Adrenal gland (tissue), 19 donors: ENCODE measurements at regions of chr2 and their contacts with region 1.

Region 1: DNA sequence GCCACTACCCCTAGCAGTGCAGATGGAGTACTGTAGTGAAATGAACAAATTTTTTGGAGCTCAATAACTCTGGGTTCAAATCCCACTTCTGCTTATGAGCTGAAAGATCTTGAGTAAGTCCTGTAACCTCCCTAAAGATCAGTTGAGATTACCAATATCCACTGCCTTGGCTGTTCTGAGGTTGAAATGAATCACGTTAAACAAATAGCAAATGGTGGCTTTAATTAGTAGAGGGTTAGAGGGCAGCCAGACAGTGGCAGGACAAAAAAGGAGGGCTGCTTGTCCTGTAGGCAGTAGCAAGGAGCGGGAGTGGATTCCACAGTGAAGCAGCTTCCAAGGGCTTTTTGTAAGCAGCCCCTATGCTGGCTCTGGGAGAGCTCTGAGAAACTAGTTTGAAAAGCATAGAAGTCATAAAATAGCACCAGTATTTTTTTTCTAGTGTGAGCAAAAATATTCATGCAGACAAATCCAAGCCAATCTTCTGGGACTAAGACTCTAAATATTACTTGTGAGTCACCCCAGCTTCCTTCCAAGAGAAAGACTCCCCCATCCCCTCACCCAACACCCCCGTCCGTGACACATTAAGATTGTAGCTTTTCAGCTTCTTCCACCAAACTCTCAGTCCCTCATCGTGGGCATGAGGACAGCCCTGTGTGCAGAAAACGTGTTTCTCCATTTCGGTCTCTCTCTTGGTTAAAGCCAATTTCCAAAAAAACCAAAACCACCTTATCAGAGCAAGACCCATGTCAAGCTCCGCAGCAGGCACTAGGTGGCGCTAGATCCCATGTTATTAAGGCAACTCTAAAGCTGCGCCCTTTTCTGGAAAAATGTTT is 123.5 kb upstream of the LGALSL start:
- DNase-seq: peak; percentile 78 to 93 (median 86)
- H3K4me3 ChIP-seq: peak overlapping the region in 1 of 4 donors; percentile 38
- H3K27ac ChIP-seq: peak overlapping the region in 2 of 5 donors; percentile 48 to 50
- H3K4me1 ChIP-seq: peaks cover 0 to 25% of the 10 kb centered on the region in 2 donors
- H3K27me3 ChIP-seq: no peaks in the 10 kb centered on the region
- CTCF ChIP-seq: peak; percentile 92 to 98 (median 96)
- POLR2A ChIP-seq: no peak

Region 2: DNA sequence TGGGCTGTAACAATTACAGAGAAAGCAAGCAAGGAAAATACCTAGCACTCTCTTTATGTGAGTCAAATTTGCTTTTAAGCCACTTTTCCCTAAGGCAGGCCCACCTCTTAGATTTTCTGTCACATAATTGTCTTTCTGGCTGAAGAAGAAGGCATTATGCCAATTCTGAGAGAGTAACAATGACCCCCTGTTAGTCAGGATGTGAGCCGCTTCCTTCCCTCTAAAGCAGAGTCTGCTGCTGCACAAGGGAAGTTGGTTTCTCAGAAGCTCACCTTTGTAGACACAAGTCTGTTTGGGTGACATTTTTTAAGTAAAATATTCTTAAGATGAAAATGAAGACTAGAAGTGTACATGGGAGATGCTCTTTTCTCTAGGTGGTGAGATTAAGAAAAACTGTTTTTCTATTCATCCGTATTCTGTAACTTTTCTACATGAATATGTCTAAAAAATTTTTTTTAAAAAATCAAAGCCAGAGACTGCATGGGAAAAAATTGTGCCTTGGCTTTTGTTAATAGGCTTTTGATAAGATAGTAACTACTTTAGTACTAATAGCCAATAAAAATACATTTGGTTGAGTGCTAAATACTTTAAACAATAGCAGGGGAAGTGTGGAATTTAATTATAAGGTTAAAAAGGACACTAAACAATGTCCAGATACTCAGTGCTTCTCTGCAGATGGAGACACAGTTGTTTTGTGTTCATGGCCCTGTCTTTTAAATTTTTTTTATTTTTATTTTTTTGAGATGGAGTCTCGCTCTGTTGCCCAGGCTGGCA is 277.8 kb before region 1 on chr2:
- intact Hi-C with region 1: loop called (anchors 5 to 10 kb)
- DNase-seq: peak in 1 of 7 donors; percentile 10
- H3K4me3 ChIP-seq: no peak overlapping the region
- H3K27ac ChIP-seq: no peak overlapping the region
- H3K4me1 ChIP-seq: peaks cover 0 to 3% of the 10 kb centered on the region in 2 donors
- H3K27me3 ChIP-seq: no peaks in the 10 kb centered on the region
- CTCF ChIP-seq: no peak
- POLR2A ChIP-seq: no peak

Region 3: GRCh38 chr2:64228126-64228678 is 102.3 kb before region 1 on chr2:
- intact Hi-C with region 1: no loop called
- DNase-seq: peak; percentile 67 to 84 (median 75)
- H3K4me3 ChIP-seq: peak overlapping the region in 2 of 4 donors; percentile 24 to 54
- H3K27ac ChIP-seq: peak overlapping the region in 4 of 5 donors; percentile 10 to 71 (median 62)
- H3K4me1 ChIP-seq: peaks cover under 1 to 16% of the 10 kb centered on the region in 2 donors
- H3K27me3 ChIP-seq: no peaks in the 10 kb centered on the region
- CTCF ChIP-seq: peak in 1 of 6 experiments; percentile 18
- POLR2A ChIP-seq: peak; percentile 31 to 35

Region 4: GRCh38 chr2:64391424-64391823 is 60.9 kb after region 1 on chr2:
- intact Hi-C with region 1: loop called in 1 of 2 experiments (anchors 10 kb)
- DNase-seq: no peak
- H3K4me3 ChIP-seq: no peak overlapping the region
- H3K27ac ChIP-seq: no peak overlapping the region
- H3K4me1 ChIP-seq: no peaks in the 10 kb centered on the region
- H3K27me3 ChIP-seq: no peaks in the 10 kb centered on the region
- CTCF ChIP-seq: no peak
- POLR2A ChIP-seq: no peak

Region 5: GRCh38 chr2:64488050-64488974 is 157.8 kb after region 1 on chr2:
- intact Hi-C with region 1: loop called (anchors 2 kb)
- DNase-seq: peak; percentile 36 to 84 (median 69)
- H3K4me3 ChIP-seq: no peak overlapping the region
- H3K27ac ChIP-seq: no peak overlapping the region
- H3K4me1 ChIP-seq: peaks cover 0 to 5% of the 10 kb centered on the region in 2 donors
- H3K27me3 ChIP-seq: no peaks in the 10 kb centered on the region
- CTCF ChIP-seq: peak; percentile 78 to 97 (median 95)
- POLR2A ChIP-seq: no peak

Region 6: DNA sequence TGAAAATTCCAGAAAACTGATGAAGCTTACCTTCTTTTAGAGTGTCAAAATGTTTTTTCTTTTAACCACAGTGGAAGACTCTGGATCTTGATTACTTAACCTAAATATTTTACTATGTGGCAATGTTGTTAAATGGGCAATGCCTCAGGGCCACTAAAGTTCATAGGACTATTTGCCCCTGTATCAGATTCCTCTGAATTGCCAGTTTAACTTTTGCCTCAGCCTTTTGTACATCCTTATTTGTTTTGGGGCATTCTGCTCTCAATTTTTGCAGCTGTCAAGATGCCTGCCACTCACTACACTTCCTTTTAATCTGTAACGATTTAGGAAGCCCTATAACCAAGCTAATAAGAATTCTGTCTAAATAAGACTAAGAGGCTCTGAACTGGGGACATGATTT is 354.9 kb after region 1 on chr2:
- intact Hi-C with region 1: no loop called
- DNase-seq: no peak
- H3K4me3 ChIP-seq: no peak overlapping the region
- H3K27ac ChIP-seq: no peak overlapping the region
- H3K4me1 ChIP-seq: no peaks in the 10 kb centered on the region
- H3K27me3 ChIP-seq: no peaks in the 10 kb centered on the region
- CTCF ChIP-seq: no peak
- POLR2A ChIP-seq: no peak

Region 7: GRCh38 chr2:64873472-64873924 is 543.0 kb after region 1 on chr2:
- intact Hi-C with region 1: loop called in 1 of 2 experiments (anchors 10 kb)
- DNase-seq: peak; percentile 50 to 89 (median 76)
- H3K4me3 ChIP-seq: peak overlapping the region in 1 of 4 donors; percentile 38
- H3K27ac ChIP-seq: no peak overlapping the region
- H3K4me1 ChIP-seq: peaks cover 6 to 12% of the 10 kb centered on the region in 2 donors
- H3K27me3 ChIP-seq: no peaks in the 10 kb centered on the region
- CTCF ChIP-seq: peak; percentile 92 to 98 (median 94)
- POLR2A ChIP-seq: no peak